Activated CD4-positive, alpha-beta T cell treated with anti-CD3 and anti-CD28 coated beads, Interleukin-2, amount 10 ng/mL, durations not matched to agents 24 days and 14 days (primary cell): ENCODE measurements at regions of chr21 and their contacts with region 1.

Region 1: DNA sequence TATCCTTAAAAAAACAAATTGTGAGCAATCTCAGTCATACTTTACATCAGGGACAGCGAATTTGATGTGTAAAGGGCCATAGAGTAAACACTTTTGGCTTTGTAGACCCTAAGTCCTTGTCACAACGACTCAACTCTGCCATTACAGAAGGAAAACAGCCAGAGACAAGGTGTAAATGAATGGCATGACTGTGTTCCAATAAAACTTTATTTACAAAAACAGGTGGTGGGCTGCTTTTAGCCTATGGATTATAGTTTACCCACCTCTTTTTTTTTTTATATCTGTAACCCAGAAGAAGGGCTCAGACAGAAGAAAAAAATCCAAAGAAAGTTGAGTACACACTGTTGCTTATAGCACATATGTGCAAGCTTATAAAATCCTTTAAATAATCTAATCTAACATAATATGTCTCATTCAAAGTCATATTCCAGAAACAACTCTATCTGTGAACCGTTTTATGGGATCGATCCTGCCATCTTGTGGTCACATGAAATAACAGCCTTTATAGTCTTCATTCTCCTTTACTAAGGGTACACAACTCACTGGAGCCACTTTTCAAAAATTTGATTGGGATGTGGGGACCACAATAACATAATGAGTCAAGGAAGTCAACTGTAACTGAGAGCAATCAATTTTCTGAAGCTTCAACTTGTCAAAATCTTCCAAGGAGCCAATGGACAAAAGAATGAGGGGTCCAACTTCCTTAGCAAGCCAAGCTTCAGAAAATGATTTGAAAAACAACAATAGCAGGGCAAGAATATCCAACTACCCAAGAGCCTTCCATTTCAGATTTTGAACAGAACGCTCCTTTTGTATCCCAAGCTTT is 142.2 kb upstream of the KRTAP19-8 start:
- DNase-seq: peak; percentile 77
- H3K4me3 Mint-ChIP-seq: peak overlapping the region; percentile 91
- H3K27ac Mint-ChIP-seq: peak overlapping the region; percentile 96
- H3K4me1 Mint-ChIP-seq: peaks cover 58% of the 10 kb centered on the region
- H3K27me3 Mint-ChIP-seq: no peaks in the 10 kb centered on the region

Region 2: DNA sequence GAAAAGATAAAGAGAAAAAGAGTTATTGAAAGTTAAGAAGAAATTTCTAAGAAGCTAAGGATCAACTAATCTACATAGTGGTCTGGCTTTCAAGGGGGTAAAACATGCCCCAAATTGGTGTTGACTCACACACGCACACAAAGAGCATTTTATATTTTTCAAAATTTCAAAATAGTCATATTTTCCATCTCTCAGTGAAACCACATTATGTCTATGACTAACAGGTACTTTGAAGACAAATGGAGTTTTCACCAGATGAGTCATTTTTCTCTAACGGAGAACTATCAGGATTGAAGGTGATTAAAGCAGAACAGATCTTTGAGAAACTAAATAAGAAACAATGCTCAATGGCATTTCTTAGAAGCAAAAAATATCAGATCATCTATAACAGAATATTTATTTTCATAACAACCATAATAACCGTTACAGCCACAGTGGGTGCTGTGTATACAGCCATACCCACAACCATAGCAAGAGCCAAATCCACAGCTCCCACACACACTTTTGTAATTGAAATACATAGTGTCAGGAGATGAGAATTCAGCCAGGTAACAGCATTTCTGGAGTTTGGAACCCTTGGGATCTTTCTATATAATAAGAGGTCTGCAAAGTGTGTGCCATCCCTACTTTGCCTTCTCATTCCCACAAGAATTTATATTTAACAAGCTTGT is 462.1 kb before region 1 on chr21 and contains the start of gene KRTAP21-3:
- intact Hi-C with region 1: loop called (anchors 5 kb)
- DNase-seq: peak; percentile 67
- H3K4me3 Mint-ChIP-seq: peak within 1 kb of the TSS; percentile 62
- H3K27ac Mint-ChIP-seq: peak within 1 kb of the TSS; percentile 68
- H3K4me1 Mint-ChIP-seq: peaks cover 31% of the 10 kb centered on the region
- H3K27me3 Mint-ChIP-seq: peaks cover 2% of the 10 kb centered on the region
- total RNA-seq, gene KRTAP21-3: not detected in 2 replicates

Region 3: GRCh38 chr21:30882866-30883597 is 297.4 kb before region 1 on chr21:
- intact Hi-C with region 1: no loop called
- DNase-seq: no peak
- H3K4me3 Mint-ChIP-seq: no peak overlapping the region
- H3K27ac Mint-ChIP-seq: no peak overlapping the region
- H3K4me1 Mint-ChIP-seq: no peaks in the 10 kb centered on the region
- H3K27me3 Mint-ChIP-seq: peaks cover 1% of the 10 kb centered on the region

Region 4: DNA sequence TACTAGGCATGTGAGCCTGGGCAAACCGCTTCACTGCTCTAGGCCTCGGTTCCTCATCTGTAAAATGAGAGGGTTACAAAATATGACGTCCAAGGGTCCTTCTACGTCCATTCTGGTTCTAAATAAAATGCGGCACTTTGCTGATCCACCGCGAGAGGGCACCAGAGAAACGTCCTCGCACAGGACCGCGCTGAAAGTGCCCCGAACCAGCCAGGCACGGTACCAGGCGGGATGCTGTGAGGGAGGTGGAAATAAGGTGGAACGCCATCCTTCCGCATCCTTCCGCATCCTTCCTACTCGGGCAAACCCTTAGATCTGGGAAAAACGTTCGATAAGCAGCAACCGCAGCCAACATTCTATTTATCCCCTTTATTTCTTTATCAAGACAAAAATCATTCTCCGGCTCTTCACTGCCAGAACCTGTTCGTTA is 81.9 kb before region 1 on chr21:
- intact Hi-C with region 1: loop called (anchors 1 kb)
- DNase-seq: peak; percentile 91
- H3K4me3 Mint-ChIP-seq: no peak overlapping the region
- H3K27ac Mint-ChIP-seq: no peak overlapping the region
- H3K4me1 Mint-ChIP-seq: peaks cover 24% of the 10 kb centered on the region
- H3K27me3 Mint-ChIP-seq: peaks cover 14% of the 10 kb centered on the region

Region 5: GRCh38 chr21:31107871-31108270 is 72.6 kb before region 1 on chr21:
- intact Hi-C with region 1: loop called (anchors 2 kb)
- DNase-seq: no peak
- H3K4me3 Mint-ChIP-seq: no peak overlapping the region
- H3K27ac Mint-ChIP-seq: no peak overlapping the region
- H3K4me1 Mint-ChIP-seq: peaks cover 30% of the 10 kb centered on the region
- H3K27me3 Mint-ChIP-seq: no peaks in the 10 kb centered on the region

Region 6: GRCh38 chr21:31731802-31732596 is 551.5 kb after region 1 on chr21 and contains the start of gene SCAF4:
- intact Hi-C with region 1: loop called (anchors 5 kb)
- DNase-seq: peak; percentile 94
- H3K4me3 Mint-ChIP-seq: peak within 1 kb of the TSS; percentile 90
- H3K27ac Mint-ChIP-seq: peak within 1 kb of the TSS; percentile 82
- H3K4me1 Mint-ChIP-seq: peaks cover 9% of the 10 kb centered on the region
- H3K27me3 Mint-ChIP-seq: no peaks in the 10 kb centered on the region
- total RNA-seq, gene SCAF4: 65.4 and 65.7 TPM in 2 replicates